PC-9 (cell line): ENCODE measurements at regions of chr7 and their contacts with region 1.

Region 1: GRCh38 chr7:24401628-24402593 is 117.9 kb downstream of the NPY start:
- DNase-seq: peak in 1 of 2 experiments; percentile 60
- H3K4me3 ChIP-seq: peak overlapping the region; percentile 50; the same call in 1 of the 2 replicates
- H3K27ac ChIP-seq: no peak overlapping the region
- H3K4me1 ChIP-seq: 0 out of 2 replicates have a peak, but pooled peaks cover 4% of the 10 kb centered on the region
- H3K27me3 ChIP-seq: no peaks in the 10 kb centered on the region
- CTCF ChIP-seq: peak; percentile 82

Region 2: DNA sequence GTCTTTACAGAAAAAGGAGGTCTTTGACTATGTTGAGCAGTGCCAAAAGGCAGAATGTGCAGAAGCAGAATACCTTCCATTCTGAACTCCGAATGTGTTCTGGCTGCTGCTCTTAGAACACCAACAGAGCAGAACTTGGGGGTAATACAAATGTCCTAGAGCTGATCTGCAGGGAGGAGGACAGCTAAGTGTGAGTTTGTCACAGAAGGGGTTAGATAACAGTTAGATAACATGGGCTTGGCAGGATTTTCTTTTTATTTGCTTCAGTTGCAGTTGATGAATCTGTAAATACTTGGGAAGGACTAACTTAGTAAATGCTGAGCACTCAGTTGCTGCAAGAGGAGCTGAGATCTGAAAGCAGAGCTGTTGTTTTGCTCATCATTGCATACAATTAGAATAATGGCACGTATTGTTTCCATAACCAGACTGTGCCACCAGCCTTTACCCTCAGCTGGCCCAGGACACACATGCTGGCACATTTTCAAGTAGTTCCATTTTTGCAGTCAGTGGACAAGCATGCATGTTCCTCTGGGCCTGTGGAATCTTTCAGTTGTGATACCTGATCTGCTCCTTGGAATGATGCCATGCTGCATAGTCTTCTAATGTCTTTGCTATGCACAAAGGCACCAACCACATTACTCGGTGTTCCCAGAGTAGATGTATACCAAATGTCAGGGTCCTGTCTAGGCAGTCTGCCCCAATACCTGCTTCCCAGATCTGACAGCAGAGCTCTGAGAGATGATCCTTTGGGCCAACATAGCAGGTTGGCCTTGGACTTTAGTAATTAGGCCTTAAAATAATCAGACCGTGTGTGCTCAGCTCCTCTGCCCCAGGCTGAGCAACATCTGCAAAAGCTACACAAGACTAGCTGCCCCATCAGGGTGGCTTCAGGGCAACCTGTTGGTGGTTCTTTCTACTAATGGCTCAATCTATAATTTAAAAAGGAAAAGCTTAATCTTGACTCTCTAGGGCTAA is 299.6 kb after region 1 on chr7:
- CTCF ChIA-PET with region 1: no interaction called
- POLR2A ChIA-PET with region 1: no interaction called
- intact Hi-C with region 1: no loop called
- DNase-seq: peak; percentile 80 to 90
- H3K4me3 ChIP-seq: no peak overlapping the region
- H3K27ac ChIP-seq: no peak overlapping the region
- H3K4me1 ChIP-seq: peaks cover 12% of the 10 kb centered on the region
- H3K27me3 ChIP-seq: no peaks in the 10 kb centered on the region
- CTCF ChIP-seq: no peak

Region 3: GRCh38 chr7:24722386-24723177 is 320.7 kb after region 1 on chr7:
- CTCF ChIA-PET with region 1: no interaction called
- POLR2A ChIA-PET with region 1: no interaction called
- intact Hi-C with region 1: loop called (anchors 5 kb)
- DNase-seq: peak in 1 of 2 experiments; percentile 28
- H3K4me3 ChIP-seq: no peak overlapping the region
- H3K27ac ChIP-seq: peak overlapping the region; percentile 31; the same call in 1 of the 2 replicates
- H3K4me1 ChIP-seq: peaks cover 26% of the 10 kb centered on the region
- H3K27me3 ChIP-seq: no peaks in the 10 kb centered on the region
- CTCF ChIP-seq: peak; percentile 59